Activated CD4-positive, alpha-beta T cell treated with anti-CD3 and anti-CD28 coated beads for 36 hours (primary cell): ENCODE measurements at regions of chr2 and their contacts with region 1.

Region 1: GRCh38 chr2:84925724-84926376 is 20.4 kb downstream of the TMSB10 start:
- DNase-seq: peak; percentile 100
- ATAC-seq: peak; percentile 83
- H3K4me3 Mint-ChIP-seq: peak overlapping the region; percentile 87
- H3K27ac Mint-ChIP-seq: peak overlapping the region; percentile 92
- H3K4me1 Mint-ChIP-seq: peaks cover 35% of the 10 kb centered on the region
- H3K27me3 Mint-ChIP-seq: no peaks in the 10 kb centered on the region

Region 2: GRCh38 chr2:84516234-84516986 is 409.4 kb before region 1 on chr2 and contains the start of gene DNAH6:
- CTCF ChIA-PET with region 1: interaction called, 4 read pairs
- POLR2A ChIA-PET with region 1: no interaction called
- intact Hi-C with region 1: loop called in 1 of 2 experiments (anchors 1 kb)
- DNase-seq: peak; percentile 93
- ATAC-seq: peak; percentile 100
- H3K4me3 Mint-ChIP-seq: peak within 1 kb of the TSS; percentile 72
- H3K27ac Mint-ChIP-seq: peak within 1 kb of the TSS; percentile 30
- H3K4me1 Mint-ChIP-seq: peaks cover 11% of the 10 kb centered on the region
- H3K27me3 Mint-ChIP-seq: no peaks in the 10 kb centered on the region
- total RNA-seq, gene DNAH6: 1.1 to 1.3 TPM

Region 3: DNA sequence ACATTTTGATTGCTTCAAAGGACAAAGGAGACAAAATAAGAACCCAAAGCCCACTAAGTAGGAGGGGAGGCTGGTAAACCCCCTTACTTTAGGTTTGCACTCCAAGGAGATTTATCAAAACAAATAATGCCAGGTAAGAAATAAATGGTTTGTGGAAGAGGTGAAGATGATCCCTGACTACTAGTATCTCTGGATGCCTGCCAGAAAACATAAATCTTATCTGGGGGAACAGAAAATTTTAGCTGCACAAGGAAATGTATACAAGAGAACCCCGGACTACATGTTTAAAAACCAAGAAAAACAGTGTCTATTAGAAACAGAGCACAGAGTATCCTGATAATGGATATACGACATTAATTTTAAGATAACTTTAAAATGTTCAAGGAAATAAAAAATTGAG is 159.1 kb before region 1 on chr2:
- CTCF ChIA-PET with region 1: no interaction called
- POLR2A ChIA-PET with region 1: no interaction called
- intact Hi-C with region 1: no loop called
- DNase-seq: no peak
- ATAC-seq: no peak
- H3K4me3 Mint-ChIP-seq: no peak overlapping the region
- H3K27ac Mint-ChIP-seq: no peak overlapping the region
- H3K4me1 Mint-ChIP-seq: peaks cover 2% of the 10 kb centered on the region
- H3K27me3 Mint-ChIP-seq: no peaks in the 10 kb centered on the region

Region 4: GRCh38 chr2:84870306-84870705 is 55.5 kb before region 1 on chr2:
- CTCF ChIA-PET with region 1: interaction called, 25 read pairs
- POLR2A ChIA-PET with region 1: no interaction called
- intact Hi-C with region 1: no loop called
- DNase-seq: no peak
- ATAC-seq: no peak
- H3K4me3 Mint-ChIP-seq: no peak overlapping the region
- H3K27ac Mint-ChIP-seq: peak overlapping the region; percentile 22
- H3K4me1 Mint-ChIP-seq: peaks cover 79% of the 10 kb centered on the region
- H3K27me3 Mint-ChIP-seq: no peaks in the 10 kb centered on the region

Region 5: GRCh38 chr2:84905181-84906107 is 20.4 kb before region 1 on chr2 and contains the start of gene TMSB10:
- CTCF ChIA-PET with region 1: interaction called, 42 read pairs
- POLR2A ChIA-PET with region 1: interaction called, 35 read pairs
- intact Hi-C with region 1: loop called (anchors 1 kb)
- DNase-seq: peak; percentile 93
- ATAC-seq: peak; percentile 69
- H3K4me3 Mint-ChIP-seq: peak within 1 kb of the TSS; percentile 96
- H3K27ac Mint-ChIP-seq: peak within 1 kb of the TSS; percentile 89
- H3K4me1 Mint-ChIP-seq: peaks cover 57% of the 10 kb centered on the region
- H3K27me3 Mint-ChIP-seq: no peaks in the 10 kb centered on the region
- total RNA-seq, gene TMSB10: 2,345 to 2,742 TPM

Region 6: DNA sequence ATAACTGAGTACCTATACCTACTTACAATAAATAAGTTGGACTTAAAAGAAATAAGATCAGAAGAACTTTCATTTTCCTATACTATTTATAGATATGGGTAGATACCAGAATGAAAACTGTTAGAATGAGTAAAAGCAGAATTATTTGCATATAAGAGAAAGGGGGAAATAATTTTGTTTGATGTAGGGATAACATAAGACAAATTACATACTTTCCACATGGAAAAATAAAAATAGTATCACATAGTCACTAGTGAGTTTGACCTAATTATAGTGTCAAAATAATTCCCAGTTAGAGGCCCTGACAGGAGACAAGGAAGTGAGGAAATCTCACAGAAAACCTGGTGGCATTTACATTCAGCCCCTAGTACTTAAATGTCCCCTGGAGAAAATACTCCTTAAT is 73.7 kb after region 1 on chr2:
- CTCF ChIA-PET with region 1: interaction called, 20 read pairs
- POLR2A ChIA-PET with region 1: no interaction called
- intact Hi-C with region 1: no loop called
- DNase-seq: no peak
- ATAC-seq: peak; percentile 31
- H3K4me3 Mint-ChIP-seq: peak overlapping the region; percentile 45
- H3K27ac Mint-ChIP-seq: peak overlapping the region; percentile 96
- H3K4me1 Mint-ChIP-seq: peaks cover 80% of the 10 kb centered on the region
- H3K27me3 Mint-ChIP-seq: no peaks in the 10 kb centered on the region

Region 7: GRCh38 chr2:85288244-85288725 is 362.4 kb after region 1 on chr2:
- CTCF ChIA-PET with region 1: interaction called, 5 read pairs
- POLR2A ChIA-PET with region 1: no interaction called
- intact Hi-C with region 1: loop called (anchors 1 to 5 kb)
- DNase-seq: no peak
- ATAC-seq: no peak
- H3K4me3 Mint-ChIP-seq: no peak overlapping the region
- H3K27ac Mint-ChIP-seq: no peak overlapping the region
- H3K4me1 Mint-ChIP-seq: peaks cover 19% of the 10 kb centered on the region
- H3K27me3 Mint-ChIP-seq: no peaks in the 10 kb centered on the region